Ovary (tissue), 10 donors: ENCODE measurements at regions of chr2 and their contacts with region 1.

Region 1: GRCh38 chr2:65129826-65130663 is at the start of gene RAB1A:
- DNase-seq: peak; percentile 99 to 100 (median 99)
- H3K4me3 ChIP-seq: peak within 1 kb of the TSS; percentile 76
- H3K27ac ChIP-seq: peak within 1 kb of the TSS; percentile 85 to 86
- H3K4me1 ChIP-seq: peaks cover 14% of the 10 kb centered on the region
- H3K27me3 ChIP-seq: no peaks in the 10 kb centered on the region
- CTCF ChIP-seq: peak; percentile 28 to 61 (median 43)
- EP300 ChIP-seq: peak; percentile 76
- POLR2A ChIP-seq: peak; percentile 96
- total RNA-seq, gene RAB1A: 57.5 to 118 (median 104) TPM

Region 2: GRCh38 chr2:63841254-63842022 is 1288.6 kb before region 1 on chr2 and contains the start of gene UGP2:
- intact Hi-C with region 1: loop called in 1 of 4 experiments (anchors 10 kb)
- DNase-seq: peak; percentile 86 to 90 (median 88)
- H3K4me3 ChIP-seq: peak within 1 kb of the TSS; percentile 92
- H3K27ac ChIP-seq: peak within 1 kb of the TSS; percentile 62 to 87
- H3K4me1 ChIP-seq: peaks cover 9% of the 10 kb centered on the region
- H3K27me3 ChIP-seq: no peaks in the 10 kb centered on the region
- CTCF ChIP-seq: peak in 2 of 3 donors; percentile 5 to 18
- EP300 ChIP-seq: no peak
- POLR2A ChIP-seq: peak; percentile 61
- total RNA-seq, gene UGP2: 74.0 to 100.0 (median 85.1) TPM

Region 3: DNA sequence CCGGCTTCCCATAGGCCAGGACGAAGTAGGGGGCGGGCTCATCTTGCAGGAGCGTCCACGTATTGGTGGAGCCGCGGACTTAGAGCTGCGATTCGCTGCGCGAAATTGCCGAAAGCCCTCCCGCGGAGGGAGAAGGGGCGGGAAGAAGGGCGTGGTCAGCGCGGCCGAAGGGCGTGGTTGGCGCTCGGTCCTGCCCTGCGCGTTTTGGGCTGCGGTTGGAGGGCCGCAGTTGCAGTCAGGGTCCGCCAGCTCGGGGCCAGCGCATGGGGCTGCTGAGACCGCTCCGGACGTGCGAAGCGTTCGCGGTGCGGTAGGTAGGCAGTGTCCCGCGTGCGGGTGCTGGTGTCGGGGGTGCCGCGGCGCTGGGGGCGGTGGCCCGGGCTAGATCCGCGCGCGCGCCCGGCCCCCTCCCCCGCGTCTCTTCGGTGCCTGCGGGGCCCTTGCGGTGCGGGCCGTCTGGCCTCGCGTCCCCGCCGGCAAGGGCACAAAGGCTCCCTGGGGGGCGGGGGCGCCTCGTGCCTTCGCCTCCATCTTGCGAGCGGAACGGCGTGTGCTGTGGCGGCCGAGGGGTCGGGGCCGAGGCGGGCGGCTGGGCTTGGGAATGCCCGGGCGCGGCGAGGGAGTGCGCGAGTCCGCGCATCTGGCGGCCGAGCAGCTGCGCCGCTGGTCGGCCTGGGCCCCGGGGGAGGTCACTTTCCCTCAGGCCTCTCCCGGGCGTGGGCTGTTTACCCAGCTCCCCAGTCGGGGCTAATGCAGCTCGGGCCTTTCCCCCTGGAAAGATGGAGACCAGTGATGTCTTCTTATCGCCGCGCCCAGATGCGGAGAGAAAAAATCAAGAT is 73.6 kb before region 1 on chr2 and contains the start of gene CEP68:
- intact Hi-C with region 1: loop called in 1 of 4 experiments (anchors 2 kb)
- DNase-seq: peak; percentile 95 to 98 (median 97)
- H3K4me3 ChIP-seq: peak within 1 kb of the TSS; percentile 79
- H3K27ac ChIP-seq: peak within 1 kb of the TSS; percentile 38 to 88
- H3K4me1 ChIP-seq: peaks cover 5% of the 10 kb centered on the region
- H3K27me3 ChIP-seq: no peaks in the 10 kb centered on the region
- CTCF ChIP-seq: peak in 1 of 3 donors; percentile 45
- EP300 ChIP-seq: no peak
- POLR2A ChIP-seq: peak; percentile 81
- total RNA-seq, gene CEP68: 13.7 to 31.6 (median 29.9) TPM

Region 4: DNA sequence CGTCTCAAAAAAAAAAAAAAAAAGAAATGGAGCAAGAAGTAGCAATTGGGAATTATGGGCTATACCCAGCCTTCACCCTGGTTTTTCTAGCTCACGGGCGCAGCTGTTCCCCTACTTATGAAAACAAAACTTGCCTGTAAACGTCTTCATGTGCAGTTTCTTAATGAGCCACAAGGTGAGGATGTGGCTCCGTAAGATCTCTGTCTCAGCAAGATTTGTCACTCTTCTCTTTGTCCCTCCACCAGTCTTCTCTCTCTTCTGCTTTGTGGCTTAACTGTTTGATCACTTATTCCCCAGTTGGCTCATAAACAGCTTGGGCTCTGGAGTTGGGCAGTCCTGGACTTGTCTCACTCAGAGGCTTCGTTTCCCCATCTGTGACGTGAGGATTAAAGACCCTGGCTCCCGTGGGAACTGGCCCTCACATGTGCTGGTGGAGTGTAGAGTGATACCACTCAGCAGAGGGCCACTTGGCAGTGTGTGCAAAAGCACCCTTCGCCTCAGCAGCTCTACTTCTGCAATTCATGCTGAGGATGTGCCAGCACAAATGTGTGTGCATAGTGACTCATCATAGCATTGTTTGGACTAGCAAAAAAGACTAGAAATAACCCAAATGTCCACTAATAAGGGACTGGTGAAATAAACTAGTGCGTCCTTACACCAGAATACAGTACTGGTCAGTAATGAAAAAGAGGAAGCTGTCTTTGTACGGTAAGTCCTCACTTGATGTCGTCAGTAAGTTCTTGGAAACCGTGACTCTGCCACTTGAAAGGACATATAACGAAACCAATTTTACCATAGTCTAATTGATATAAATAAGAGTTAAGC is 65.1 kb before region 1 on chr2:
- intact Hi-C with region 1: loop called in 2 of 4 experiments (anchors 2 to 10 kb)
- DNase-seq: peak; percentile 53 to 65 (median 58)
- H3K4me3 ChIP-seq: no peak overlapping the region
- H3K27ac ChIP-seq: peak overlapping the region in 1 of 2 donors; percentile 52
- H3K4me1 ChIP-seq: peaks cover 8% of the 10 kb centered on the region
- H3K27me3 ChIP-seq: no peaks in the 10 kb centered on the region
- CTCF ChIP-seq: peak; percentile 35 to 86 (median 62)
- EP300 ChIP-seq: no peak
- POLR2A ChIP-seq: no peak

Region 5: GRCh38 chr2:65070172-65070830 is 59.7 kb before region 1 on chr2:
- intact Hi-C with region 1: loop called in 2 of 4 experiments (anchors 2 to 10 kb)
- DNase-seq: no peak
- H3K4me3 ChIP-seq: no peak overlapping the region
- H3K27ac ChIP-seq: peak overlapping the region in 1 of 2 donors; percentile 4
- H3K4me1 ChIP-seq: peaks cover 1% of the 10 kb centered on the region
- H3K27me3 ChIP-seq: no peaks in the 10 kb centered on the region
- CTCF ChIP-seq: peak in 1 of 3 donors; percentile 12
- EP300 ChIP-seq: no peak
- POLR2A ChIP-seq: no peak